Heart left ventricle (tissue), 16 donors: ENCODE measurements at regions of chr20 and their contacts with region 1.

Region 1: DNA sequence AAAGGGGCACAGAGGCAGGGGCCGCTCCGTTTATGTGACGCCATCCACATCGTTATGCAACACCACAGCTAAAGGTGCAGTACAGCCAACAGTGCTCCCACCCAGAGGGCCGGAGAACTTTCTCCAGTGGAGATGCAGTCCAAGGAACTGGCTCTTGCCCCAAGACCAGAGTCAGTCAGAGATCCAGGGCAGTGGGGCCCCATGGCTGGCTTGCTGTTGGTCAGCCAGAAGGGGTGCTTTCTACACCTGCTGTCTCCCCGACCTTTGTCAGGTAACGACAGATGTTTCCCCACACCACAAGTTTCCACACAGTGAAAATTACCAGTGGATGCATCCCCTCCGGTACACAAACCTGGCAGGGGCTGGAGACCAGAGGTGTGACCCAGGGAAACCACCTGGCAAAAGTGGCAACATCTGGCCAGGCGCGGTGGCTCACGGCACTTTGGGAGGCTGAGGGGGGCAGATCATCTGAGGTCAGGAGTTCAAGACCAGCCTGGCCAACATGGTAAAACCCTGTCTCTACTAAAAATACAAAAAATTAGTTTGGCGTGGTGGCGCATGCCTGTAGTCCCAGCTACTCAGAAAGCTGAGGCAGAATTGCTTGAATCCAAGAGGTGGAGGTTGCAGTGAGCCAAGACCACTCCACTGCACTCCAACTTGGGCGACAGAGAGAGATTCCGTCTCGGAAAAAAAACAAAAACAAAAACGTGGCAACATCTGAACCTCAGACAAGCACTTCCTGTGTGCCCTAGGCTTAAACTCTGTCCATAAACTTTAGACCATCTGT is 34.9 kb downstream of the UBE2V1 start:
- DNase-seq: peak in 1 of 5 donors; percentile 37
- ATAC-seq: no peak
- H3K4me3 ChIP-seq: no peak overlapping the region
- H3K27ac ChIP-seq: peak overlapping the region in 1 of 12 donors; percentile 54
- H3K4me1 ChIP-seq: peaks cover 0 to 48% (median 7%) of the 10 kb centered on the region in 12 donors
- H3K27me3 ChIP-seq: no peaks in the 10 kb centered on the region
- CTCF ChIP-seq: no peak
- POLR2A ChIP-seq: no peak

Region 2: GRCh38 chr20:50165684-50166554 is 87.9 kb after region 1 on chr20:
- intact Hi-C with region 1: loop called in 1 of 10 experiments (anchors 5 kb)
- DNase-seq: peak; percentile 95 to 99 (median 97)
- ATAC-seq: peak; percentile 97 to 99 (median 98)
- H3K4me3 ChIP-seq: peak overlapping the region in 11 of 12 donors; percentile 0 to 45 (median 34)
- H3K27ac ChIP-seq: peak overlapping the region; percentile 74 to 92 (median 89)
- H3K4me1 ChIP-seq: peaks cover 0 to 39% (median 17%) of the 10 kb centered on the region in 12 donors
- H3K27me3 ChIP-seq: no peaks in the 10 kb centered on the region
- CTCF ChIP-seq: peak in 1 of 12 donors; percentile 18
- POLR2A ChIP-seq: peak in 1 of 2 donors; percentile 50

Region 3: GRCh38 chr20:50193169-50193850 is 115.3 kb after region 1 on chr20:
- intact Hi-C with region 1: no loop called
- DNase-seq: peak in 2 of 5 donors; percentile 48 to 56
- ATAC-seq: peak in 1 of 4 donors; percentile 38
- H3K4me3 ChIP-seq: peak overlapping the region; percentile 76 to 96 (median 88)
- H3K27ac ChIP-seq: peak overlapping the region; percentile 97 to 100 (median 98)
- H3K4me1 ChIP-seq: peaks cover 0 to 40% (median 19%) of the 10 kb centered on the region in 12 donors
- H3K27me3 ChIP-seq: no peaks in the 10 kb centered on the region
- CTCF ChIP-seq: no peak
- POLR2A ChIP-seq: no peak